HCT116 (cell line): ENCODE measurements at regions of chr6 and their contacts with region 1.

Region 1: DNA sequence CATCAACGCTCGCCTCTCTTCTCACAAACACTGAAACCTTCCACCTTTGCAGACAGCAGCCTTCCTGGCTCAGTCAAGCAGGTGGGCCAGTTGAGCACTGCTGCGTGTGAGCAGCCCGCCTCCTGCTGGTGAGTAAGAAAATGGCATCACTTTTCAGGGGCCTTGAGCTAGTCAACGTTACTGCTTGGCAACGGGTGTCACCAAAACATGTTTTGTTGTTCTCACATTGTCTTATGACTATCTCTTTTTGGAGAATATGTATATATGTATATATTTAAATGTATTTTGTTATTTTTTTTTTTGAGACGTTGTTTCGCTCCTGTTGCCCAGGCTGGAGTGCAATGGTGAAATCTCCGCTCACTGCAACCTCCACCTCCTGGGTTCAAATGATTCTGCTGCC is 97.0 kb upstream of the AGPAT4 start:
- DNase-seq: peak; percentile 64
- ATAC-seq: peak; percentile 79
- H3K4me3 ChIP-seq: no peak overlapping the region
- H3K27ac ChIP-seq: no peak overlapping the region
- H3K4me1 ChIP-seq: peaks cover 0 to 19% of the 10 kb centered on the region in 2 experiments; a peak in 1 of 4 replicates
- H3K27me3 ChIP-seq: no peaks in the 10 kb centered on the region
- CTCF ChIP-seq: peak; percentile 78 to 92 (median 90)
- POLR2A ChIP-seq: no peak
- RAD21 ChIP-seq: peak; percentile 99

Region 2: DNA sequence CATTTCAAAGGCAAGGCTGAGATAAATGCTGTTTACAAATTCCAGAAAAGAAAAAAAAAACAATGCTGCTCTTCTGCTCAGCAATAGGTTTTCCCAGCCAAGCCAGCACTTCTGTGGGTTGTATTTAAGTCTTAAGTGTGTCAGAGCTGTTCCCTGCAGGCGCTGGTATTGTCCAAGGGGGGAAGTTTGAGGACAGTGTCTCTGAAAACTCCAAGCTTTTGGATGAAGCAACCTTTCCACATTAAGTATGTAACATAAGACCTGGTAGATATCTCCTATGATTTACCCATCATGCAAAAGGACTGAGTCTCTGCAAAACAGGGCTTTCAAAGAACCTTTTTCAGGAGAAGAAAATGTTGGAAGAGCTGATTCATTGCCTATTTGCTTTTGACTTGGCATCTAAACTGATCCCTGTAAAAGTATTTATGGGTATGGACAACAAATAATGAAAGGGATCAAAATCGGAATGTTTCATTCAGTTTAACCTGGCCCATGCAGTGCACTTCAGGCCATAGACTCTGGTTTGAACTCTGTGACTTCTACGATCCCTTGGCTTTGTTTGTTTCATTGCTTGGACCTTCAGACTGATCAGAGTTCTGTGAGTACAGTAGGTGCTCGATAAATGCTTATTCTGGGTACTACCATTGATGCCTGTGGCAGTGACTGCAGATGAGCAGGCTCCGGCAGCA is 685.0 kb before region 1 on chr6:
- CTCF ChIA-PET with region 1: no interaction called
- POLR2A ChIA-PET with region 1: no interaction called
- RAD21 ChIA-PET with region 1: no interaction called
- intact Hi-C with region 1: loop called (anchors 5 kb)
- DNase-seq: no peak
- ATAC-seq: peak; percentile 54; the same call in 1 of the 2 replicates
- H3K4me3 ChIP-seq: peak overlapping the region; percentile 24 to 41
- H3K27ac ChIP-seq: 0 out of 2 replicates have a peak overlapping the region, but pooled peaks have one; percentile 1
- H3K4me1 ChIP-seq: peaks cover 0 to 6% of the 10 kb centered on the region in 2 experiments; a peak in 1 of 4 replicates
- H3K27me3 ChIP-seq: no peaks in the 10 kb centered on the region
- CTCF ChIP-seq: no peak
- POLR2A ChIP-seq: no peak
- RAD21 ChIP-seq: no peak

Region 3: GRCh38 chr6:160750276-160750689 is 620.6 kb before region 1 on chr6:
- CTCF ChIA-PET with region 1: interaction called, 46 read pairs
- POLR2A ChIA-PET with region 1: no interaction called
- RAD21 ChIA-PET with region 1: interaction called, 5 to 7 read pairs
- intact Hi-C with region 1: loop called (anchors 1 kb)
- DNase-seq: peak; percentile 18
- ATAC-seq: peak; percentile 87
- H3K4me3 ChIP-seq: no peak overlapping the region
- H3K27ac ChIP-seq: no peak overlapping the region
- H3K4me1 ChIP-seq: no peaks in the 10 kb centered on the region
- H3K27me3 ChIP-seq: peaks cover 4% of the 10 kb centered on the region; the same call in 1 of the 2 replicates
- CTCF ChIP-seq: peak; percentile 67 to 90 (median 80)
- POLR2A ChIP-seq: no peak
- RAD21 ChIP-seq: peak; percentile 94

Region 4: DNA sequence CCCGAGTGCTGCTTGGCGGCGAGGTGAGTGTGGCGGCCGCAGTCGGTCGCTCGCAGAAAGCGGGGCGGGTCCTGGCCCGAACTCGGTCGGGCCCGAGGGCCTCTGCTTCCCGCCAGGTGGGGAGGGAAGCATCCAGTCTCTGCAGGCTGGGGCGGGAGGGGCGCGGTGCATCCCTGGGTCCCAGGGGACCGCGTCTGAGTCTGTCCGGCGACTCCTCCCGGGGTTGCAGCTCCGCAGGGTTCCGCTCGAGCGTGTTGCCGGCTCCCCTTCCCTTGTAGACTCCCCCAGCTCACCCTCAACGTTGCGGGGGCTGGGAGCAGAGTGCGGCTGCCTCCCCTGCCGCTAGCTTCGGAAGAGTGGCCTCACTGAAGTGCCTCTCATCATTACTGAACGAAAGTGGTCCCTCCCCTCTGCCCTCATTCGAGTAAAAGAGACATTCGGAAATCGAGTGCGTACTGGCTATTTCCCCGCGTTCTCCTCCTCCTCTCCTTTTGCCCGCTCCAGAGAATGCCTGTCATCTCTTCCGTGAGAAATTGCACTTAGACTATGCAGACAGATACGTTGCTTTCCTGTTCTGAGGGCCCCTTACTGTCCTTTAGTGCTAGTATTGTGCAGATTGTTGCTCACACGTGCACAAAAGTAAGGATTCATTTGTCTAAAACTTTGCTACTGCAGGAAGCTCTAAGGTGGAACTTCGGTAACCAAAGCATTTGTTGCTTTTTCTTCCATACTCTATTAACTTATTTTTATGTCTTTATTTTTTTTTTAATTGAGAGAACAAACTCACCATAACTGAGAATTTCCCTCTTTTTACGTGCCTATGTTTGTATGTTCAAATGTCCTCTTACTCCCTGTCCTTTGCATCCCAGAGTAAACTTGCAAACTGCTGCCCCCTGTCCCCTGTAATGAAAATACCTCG is 378.6 kb before region 1 on chr6:
- CTCF ChIA-PET with region 1: interaction called, 3 read pairs
- POLR2A ChIA-PET with region 1: no interaction called
- RAD21 ChIA-PET with region 1: interaction called in 1 of 2 experiments, 3 read pairs
- intact Hi-C with region 1: loop called (anchors 5 kb)
- DNase-seq: peak; percentile 42
- ATAC-seq: peak; percentile 63
- H3K4me3 ChIP-seq: peak overlapping the region; percentile 87 to 97
- H3K27ac ChIP-seq: peak overlapping the region; percentile 89
- H3K4me1 ChIP-seq: peaks cover 3 to 18% of the 10 kb centered on the region in 2 experiments; a peak in 3 of 4 replicates
- H3K27me3 ChIP-seq: no peaks in the 10 kb centered on the region
- CTCF ChIP-seq: peak; percentile 49 to 69 (median 69); a peak in 5 of 6 replicates
- POLR2A ChIP-seq: no peak
- RAD21 ChIP-seq: peak; percentile 63

Region 5: GRCh38 chr6:161152907-161153662 is 217.8 kb before region 1 on chr6:
- CTCF ChIA-PET with region 1: interaction called, 23 read pairs
- POLR2A ChIA-PET with region 1: no interaction called
- RAD21 ChIA-PET with region 1: interaction called, 3 read pairs
- intact Hi-C with region 1: loop called (anchors 1 kb)
- DNase-seq: no peak
- ATAC-seq: peak; percentile 84
- H3K4me3 ChIP-seq: no peak overlapping the region
- H3K27ac ChIP-seq: no peak overlapping the region
- H3K4me1 ChIP-seq: no peaks in the 10 kb centered on the region
- H3K27me3 ChIP-seq: no peaks in the 10 kb centered on the region
- CTCF ChIP-seq: peak; percentile 53 to 70 (median 64); a peak in 5 of 6 replicates
- POLR2A ChIP-seq: no peak
- RAD21 ChIP-seq: peak; percentile 91

Region 6: DNA sequence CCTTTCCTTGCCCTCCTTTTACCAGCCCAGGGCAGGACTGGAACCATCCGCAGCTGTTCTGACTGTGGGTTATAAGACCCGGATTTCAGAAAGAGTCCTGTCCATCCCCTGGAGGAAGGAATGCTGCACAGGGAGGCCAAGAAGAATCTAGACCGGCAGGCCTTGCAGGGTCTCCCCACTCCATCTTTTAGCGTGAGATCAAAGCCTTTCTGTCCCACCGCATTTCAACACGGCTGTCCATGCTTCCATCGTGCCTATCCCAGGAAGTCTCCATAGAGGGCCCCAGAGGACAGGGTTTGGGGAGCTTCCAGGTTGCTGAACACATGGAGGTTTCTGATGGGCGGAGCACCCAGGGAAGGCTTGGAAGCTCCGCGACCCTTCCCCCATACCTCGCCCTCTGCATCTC is 17.7 kb before region 1 on chr6:
- CTCF ChIA-PET with region 1: interaction called, 12 read pairs
- POLR2A ChIA-PET with region 1: no interaction called
- RAD21 ChIA-PET with region 1: no interaction called
- intact Hi-C with region 1: no loop called
- DNase-seq: peak; percentile 52
- ATAC-seq: peak; percentile 96
- H3K4me3 ChIP-seq: no peak overlapping the region
- H3K27ac ChIP-seq: no peak overlapping the region
- H3K4me1 ChIP-seq: no peaks in the 10 kb centered on the region
- H3K27me3 ChIP-seq: no peaks in the 10 kb centered on the region
- CTCF ChIP-seq: peak in 2 of 3 experiments; percentile 54 to 56; a peak in 3 of 6 replicates
- POLR2A ChIP-seq: no peak
- RAD21 ChIP-seq: peak; percentile 65